ENCODE measurements at regions of chr5 and their contacts with region 1.

Region 1: GRCh38 chr5:79924936-79925893 is 65.8 kb downstream of the MTX3 start:
- DNase-seq: peak in 15 of 35 experiments; percentile 1 to 30 (median 9)
- ATAC-seq: no peak
- H3K4me3 ChIP-seq: no peak overlapping the region
- H3K4me3 Mint-ChIP-seq: no peak overlapping the region
- H3K27ac ChIP-seq: no peak overlapping the region
- H3K27ac Mint-ChIP-seq: no peak overlapping the region
- H3K4me1 ChIP-seq: no peaks in the 10 kb centered on the region
- H3K4me1 Mint-ChIP-seq: no peaks in the 10 kb centered on the region
- H3K27me3 ChIP-seq: peaks cover 0 to 3% of the 10 kb centered on the region in 2 experiments
- H3K27me3 Mint-ChIP-seq: peaks cover 0 to 4% of the 10 kb centered on the region in 2 donors

Region 2: DNA sequence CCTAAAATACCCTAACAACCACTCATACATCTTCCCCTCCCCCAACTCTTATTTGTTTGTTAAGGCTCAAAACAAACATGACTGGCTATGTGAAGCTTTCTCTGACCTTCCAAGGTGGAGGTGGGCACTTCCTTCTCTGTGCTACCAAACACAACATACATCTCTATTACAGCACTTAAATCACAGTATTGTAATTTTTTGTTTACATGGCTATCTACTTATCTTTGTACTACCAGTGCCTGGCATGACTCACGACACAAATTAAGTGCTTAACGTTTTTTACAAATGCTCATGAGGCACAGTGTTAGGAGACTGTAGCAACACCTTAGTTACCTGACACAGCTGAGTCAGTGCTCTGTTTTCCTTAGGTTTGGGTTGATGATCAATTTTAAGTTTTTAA is 429.9 kb before region 1 on chr5:
- CTCF ChIA-PET with region 1: interaction called in 1 of 2 experiments, 10 read pairs
- POLR2A ChIA-PET with region 1: no interaction called
- DNase-seq: no peak
- ATAC-seq: no peak
- H3K4me3 ChIP-seq: no peak overlapping the region
- H3K4me3 Mint-ChIP-seq: no peak overlapping the region
- H3K27ac ChIP-seq: no peak overlapping the region
- H3K27ac Mint-ChIP-seq: no peak overlapping the region
- H3K4me1 ChIP-seq: no peaks in the 10 kb centered on the region
- H3K4me1 Mint-ChIP-seq: no peaks in the 10 kb centered on the region
- H3K27me3 ChIP-seq: no peaks in the 10 kb centered on the region
- H3K27me3 Mint-ChIP-seq: peaks cover 5 to 6% of the 10 kb centered on the region in 2 donors

Region 3: GRCh38 chr5:80083101-80083890 is 158.1 kb after region 1 on chr5:
- CTCF ChIA-PET with region 1: interaction called, 5 to 10 read pairs
- POLR2A ChIA-PET with region 1: no interaction called
- DNase-seq: peak in 10 of 35 experiments; percentile 1 to 65 (median 13)
- ATAC-seq: peak; percentile 63 to 81 (median 79)
- H3K4me3 ChIP-seq: peak overlapping the region; percentile 25 to 44
- H3K4me3 Mint-ChIP-seq: peak overlapping the region; percentile 62 to 82 (median 64)
- H3K27ac ChIP-seq: peak overlapping the region; percentile 45
- H3K27ac Mint-ChIP-seq: peak overlapping the region; percentile 58 to 82
- H3K4me1 ChIP-seq: peaks cover 4 to 8% of the 10 kb centered on the region in 2 experiments
- H3K4me1 Mint-ChIP-seq: peaks cover 7 to 12% (median 10%) of the 10 kb centered on the region in 3 donors
- H3K27me3 ChIP-seq: no peaks in the 10 kb centered on the region
- H3K27me3 Mint-ChIP-seq: no peaks in the 10 kb centered on the region